IMR-90 (cell line): ENCODE measurements at regions of chr12 and their contacts with region 1.

Region 1: DNA sequence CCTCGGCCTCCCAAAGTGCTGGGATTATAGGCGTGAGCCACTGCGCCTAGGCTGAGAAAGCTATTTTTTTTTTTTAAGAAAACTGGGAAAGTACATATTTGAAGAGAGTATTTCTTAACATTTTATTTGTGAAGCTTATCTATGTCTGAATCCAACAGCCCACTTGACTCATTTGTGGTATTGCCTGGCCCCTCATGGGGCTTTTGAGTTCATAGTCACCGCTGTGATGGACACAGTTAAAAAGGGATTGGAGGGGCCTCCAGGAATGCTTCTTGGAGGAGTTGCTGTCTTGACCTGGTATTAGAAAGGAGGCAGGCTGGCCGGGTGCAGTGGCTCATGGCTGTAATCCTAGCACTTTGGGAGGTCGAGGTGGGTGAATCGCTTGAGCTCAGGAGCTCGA is 26.5 kb downstream of the BCL7A start:
- DNase-seq: peak; percentile 26
- ATAC-seq: no peak
- H3K4me3 ChIP-seq: no peak overlapping the region
- H3K27ac ChIP-seq: no peak overlapping the region
- H3K4me1 ChIP-seq: peaks cover 7% of the 10 kb centered on the region
- H3K27me3 ChIP-seq: no peaks in the 10 kb centered on the region
- CTCF ChIP-seq: no peak
- POLR2A ChIP-seq: no peak
- RAD21 ChIP-seq: no peak

Region 2: DNA sequence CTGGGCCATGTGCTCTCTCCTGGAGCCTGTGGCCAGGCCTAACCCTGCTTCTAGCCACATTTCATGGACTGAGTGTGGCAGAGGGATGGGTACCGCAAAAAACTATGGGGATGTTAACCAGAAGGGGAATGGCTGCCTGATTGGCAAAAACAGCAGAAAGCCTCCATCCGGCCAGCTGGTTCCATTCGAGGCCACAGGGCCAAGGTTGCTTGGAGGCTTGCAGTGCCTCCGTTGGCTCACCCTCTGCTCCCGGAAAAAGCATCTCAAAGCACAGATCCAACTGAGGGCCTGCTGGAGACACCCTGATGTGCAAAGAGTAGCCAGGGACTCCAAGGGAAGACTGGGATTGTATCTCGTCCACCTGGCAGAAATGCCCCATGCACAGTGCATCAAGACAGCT is 319.1 kb before region 1 on chr12:
- CTCF ChIA-PET with region 1: no interaction called
- POLR2A ChIA-PET with region 1: no interaction called
- dilution Hi-C with region 1: no loop called
- in situ Hi-C with region 1: no loop called
- intact Hi-C with region 1: no loop called
- DNase-seq: no peak
- ATAC-seq: no peak
- H3K4me3 ChIP-seq: no peak overlapping the region
- H3K27ac ChIP-seq: no peak overlapping the region
- H3K4me1 ChIP-seq: no peaks in the 10 kb centered on the region
- H3K27me3 ChIP-seq: no peaks in the 10 kb centered on the region
- CTCF ChIP-seq: no peak
- POLR2A ChIP-seq: no peak
- RAD21 ChIP-seq: no peak

Region 3: GRCh38 chr12:122078141-122079032 is 30.2 kb after region 1 on chr12 and contains the start of gene MLXIP:
- CTCF ChIA-PET with region 1: no interaction called
- POLR2A ChIA-PET with region 1: no interaction called
- dilution Hi-C with region 1: no loop called
- in situ Hi-C with region 1: no loop called
- intact Hi-C with region 1: loop called (anchors 1 kb)
- DNase-seq: peak; percentile 89
- ATAC-seq: peak; percentile 81
- H3K4me3 ChIP-seq: peak within 1 kb of the TSS; percentile 86
- H3K27ac ChIP-seq: peak within 1 kb of the TSS; percentile 62
- H3K4me1 ChIP-seq: peaks cover 10% of the 10 kb centered on the region
- H3K27me3 ChIP-seq: peaks cover 4% of the 10 kb centered on the region; the same call in 1 of the 2 replicates
- CTCF ChIP-seq: no peak
- POLR2A ChIP-seq: peak; percentile 95
- RAD21 ChIP-seq: peak; percentile 1; the same call in 1 of the 2 replicates
- total RNA-seq, gene MLXIP: 2.7 and 3.1 TPM in 2 replicates

Region 4: DNA sequence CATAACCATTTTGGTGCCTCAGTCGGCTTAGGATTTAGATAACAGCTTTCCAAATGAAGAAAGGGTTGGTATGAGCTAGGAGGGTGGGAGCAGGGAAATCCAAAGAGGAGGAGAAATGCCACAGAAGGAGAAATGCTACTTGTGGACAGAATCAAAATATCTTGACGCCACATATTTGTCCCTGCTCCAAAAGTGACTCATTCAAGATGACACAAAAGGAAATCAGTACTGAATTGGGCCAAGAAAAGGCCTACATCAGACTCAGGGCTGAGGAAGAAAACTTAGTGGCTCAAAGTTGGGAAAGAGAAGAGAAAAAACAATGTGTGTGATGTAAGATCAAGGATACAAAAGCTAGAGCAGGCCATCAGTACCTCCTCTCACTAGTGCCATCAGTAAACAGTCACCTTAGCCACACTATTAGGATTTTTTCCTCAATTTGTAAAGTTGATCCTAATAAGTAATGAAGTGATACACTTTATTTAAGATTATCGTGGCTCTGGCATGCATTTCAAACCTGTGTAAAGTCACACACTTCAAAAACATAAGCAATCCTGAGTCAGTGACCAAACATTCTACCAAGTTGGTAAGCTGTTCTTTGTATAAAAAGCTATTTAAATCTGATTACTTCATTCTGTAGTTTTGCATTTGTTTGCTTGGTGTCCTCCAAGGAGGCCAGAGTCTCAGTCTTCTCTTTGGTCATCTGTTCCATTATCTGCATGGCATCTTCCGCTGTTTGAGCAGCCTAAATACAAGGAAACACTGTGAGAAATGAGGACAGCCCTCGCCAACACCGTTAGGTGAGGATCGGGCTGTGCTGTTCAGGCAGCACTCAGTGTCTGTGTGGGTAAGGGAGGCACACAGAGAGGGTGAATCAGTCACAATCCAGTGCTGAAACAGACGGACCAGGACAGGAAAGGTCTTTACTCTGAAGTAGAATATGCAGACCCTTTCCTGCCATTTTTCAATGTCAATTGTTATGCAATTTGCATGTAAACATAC is 270.8 kb after region 1 on chr12:
- CTCF ChIA-PET with region 1: no interaction called
- POLR2A ChIA-PET with region 1: no interaction called
- dilution Hi-C with region 1: no loop called
- in situ Hi-C with region 1: no loop called
- intact Hi-C with region 1: no loop called
- DNase-seq: peak; percentile 91
- ATAC-seq: peak; percentile 82
- H3K4me3 ChIP-seq: no peak overlapping the region
- H3K27ac ChIP-seq: peak overlapping the region; percentile 93
- H3K4me1 ChIP-seq: peaks cover 14% of the 10 kb centered on the region
- H3K27me3 ChIP-seq: no peaks in the 10 kb centered on the region
- CTCF ChIP-seq: no peak
- POLR2A ChIP-seq: no peak
- RAD21 ChIP-seq: no peak

Region 5: GRCh38 chr12:122668268-122668667 is 620.1 kb after region 1 on chr12:
- CTCF ChIA-PET with region 1: no interaction called
- POLR2A ChIA-PET with region 1: no interaction called
- dilution Hi-C with region 1: no loop called
- in situ Hi-C with region 1: no loop called
- intact Hi-C with region 1: no loop called
- DNase-seq: no peak
- ATAC-seq: no peak
- H3K4me3 ChIP-seq: no peak overlapping the region
- H3K27ac ChIP-seq: no peak overlapping the region
- H3K4me1 ChIP-seq: peaks cover 3% of the 10 kb centered on the region
- H3K27me3 ChIP-seq: no peaks in the 10 kb centered on the region
- CTCF ChIP-seq: no peak
- POLR2A ChIP-seq: no peak
- RAD21 ChIP-seq: no peak